ENCODE measurements at regions of chr6 and their contacts with region 1.

Region 1: DNA sequence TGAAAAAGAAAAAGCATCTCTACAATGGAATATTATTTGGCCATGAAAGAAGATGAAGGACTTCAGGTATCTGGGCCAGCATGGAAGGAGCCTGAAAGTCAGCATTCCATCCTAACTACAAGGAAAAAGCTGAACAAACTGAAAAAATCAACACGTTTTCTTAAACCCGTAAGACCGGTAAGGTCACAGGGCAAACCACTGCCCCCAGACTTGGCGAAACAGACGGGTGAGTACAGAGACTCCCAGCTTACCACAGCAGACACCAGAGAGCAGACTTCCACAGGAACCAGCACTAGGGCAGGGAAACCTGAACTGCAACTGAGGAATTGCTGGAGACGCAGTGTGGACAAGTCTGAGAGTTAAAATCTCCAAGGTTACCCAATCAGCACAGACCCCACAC is 31.4 kb downstream of the BEND3 start:
- DNase-seq: no peak
- H3K4me3 ChIP-seq: no peak overlapping the region
- H3K27ac ChIP-seq: no peak overlapping the region
- H3K4me1 ChIP-seq: no peaks in the 10 kb centered on the region
- H3K27me3 ChIP-seq: no peaks in the 10 kb centered on the region
- CTCF ChIP-seq: no peak

Region 2: GRCh38 chr6:106794129-106794528 is 289.8 kb before region 1 on chr6:
- CTCF ChIA-PET with region 1: no interaction called
- POLR2A ChIA-PET with region 1: interaction called, 10 read pairs
- intact Hi-C with region 1: no loop called
- DNase-seq: no peak
- H3K4me3 ChIP-seq: no peak overlapping the region
- H3K27ac ChIP-seq: no peak overlapping the region
- H3K4me1 ChIP-seq: peaks cover 30% of the 10 kb centered on the region
- H3K27me3 ChIP-seq: no peaks in the 10 kb centered on the region
- CTCF ChIP-seq: no peak

Measured in PC-9 (cell line).